Right cardiac atrium (tissue), 5 donors: ENCODE measurements at regions of chrX and their contacts with region 1.

Region 1: DNA sequence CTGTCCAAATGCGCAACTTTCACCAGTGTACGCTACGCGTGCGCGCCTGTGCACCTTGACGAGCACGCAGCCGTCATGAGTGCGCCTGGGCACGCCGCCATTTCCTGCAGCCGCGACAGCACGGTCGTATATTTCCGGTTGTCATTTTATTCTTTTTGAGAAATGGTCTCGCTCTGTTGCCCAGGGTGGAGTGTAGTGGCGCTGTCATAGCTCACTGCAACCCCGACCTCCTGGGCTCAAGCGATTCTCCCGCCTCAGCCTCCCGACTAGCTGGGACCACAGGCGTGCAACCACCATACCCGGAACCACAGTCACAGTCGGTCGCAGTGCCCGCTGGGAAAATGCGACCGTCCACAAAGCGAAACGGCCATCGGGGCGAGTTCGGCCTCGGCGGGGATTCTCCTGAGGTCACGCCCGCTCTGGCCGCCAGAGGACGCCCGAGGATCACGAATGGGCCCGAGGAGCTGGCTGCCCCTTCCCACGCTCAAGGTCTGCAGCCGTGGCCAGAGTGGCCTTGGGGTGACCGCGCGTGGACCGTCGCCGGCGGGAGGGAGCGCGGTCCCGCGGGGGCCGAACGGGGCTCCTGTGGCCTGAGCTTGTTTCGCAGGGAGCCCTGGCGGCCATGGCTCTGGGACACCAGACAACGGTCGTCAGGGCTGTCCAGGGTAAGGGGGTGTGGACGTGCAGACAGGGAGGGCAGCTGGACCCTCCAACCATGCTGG is 23.7 kb upstream of the PNMA3 start:
- DNase-seq: peak; percentile 68 to 89 (median 89)
- ATAC-seq: peak; percentile 83 to 90
- H3K4me3 ChIP-seq: no peak overlapping the region
- H3K27ac ChIP-seq: no peak overlapping the region
- H3K4me1 ChIP-seq: no peaks in the 10 kb centered on the region
- H3K27me3 ChIP-seq: no peaks in the 10 kb centered on the region

Region 2: DNA sequence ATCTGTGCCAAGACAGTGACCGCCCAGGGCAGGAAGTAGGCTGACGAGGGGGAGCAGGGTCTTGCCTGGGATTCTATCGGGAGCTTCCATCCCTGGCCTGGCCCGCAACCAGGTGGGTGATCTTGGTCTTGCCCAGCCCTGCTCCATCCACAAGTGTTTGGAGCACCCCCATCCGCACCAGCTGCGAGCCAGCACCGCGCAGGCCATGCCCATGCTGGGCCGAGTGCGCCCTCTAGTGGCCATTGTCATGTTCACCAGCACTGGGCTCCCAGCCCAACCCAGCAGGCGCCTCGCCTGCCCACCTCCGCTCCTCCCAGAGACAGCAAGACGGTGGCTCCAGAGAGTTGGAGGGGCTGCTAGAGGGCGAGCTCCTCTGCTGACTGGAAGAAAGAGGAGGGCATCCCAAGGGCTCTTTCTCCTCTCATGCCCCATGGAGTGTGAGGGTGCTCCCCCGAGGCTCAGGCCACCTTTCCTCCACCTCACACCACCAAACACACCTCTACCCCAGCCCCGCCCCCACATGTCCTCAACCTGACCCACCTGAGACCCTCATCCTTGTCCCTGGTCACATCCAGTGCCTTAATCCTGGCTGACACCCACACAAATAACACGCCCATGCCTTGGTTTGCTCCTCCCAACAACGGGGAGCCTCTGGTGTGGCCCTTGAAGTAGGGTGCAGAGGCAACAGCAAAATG is 475.1 kb after region 1 on chrX:
- intact Hi-C with region 1: loop called in 1 of 4 experiments (anchors 5 kb)
- DNase-seq: peak; percentile 82 to 93 (median 93)
- ATAC-seq: peak; percentile 75 to 84
- H3K4me3 ChIP-seq: no peak overlapping the region
- H3K27ac ChIP-seq: no peak overlapping the region
- H3K4me1 ChIP-seq: no peaks in the 10 kb centered on the region
- H3K27me3 ChIP-seq: no peaks in the 10 kb centered on the region